SK-N-SH (cell line): ENCODE measurements at regions of chr5 and their contacts with region 1.

Region 1: DNA sequence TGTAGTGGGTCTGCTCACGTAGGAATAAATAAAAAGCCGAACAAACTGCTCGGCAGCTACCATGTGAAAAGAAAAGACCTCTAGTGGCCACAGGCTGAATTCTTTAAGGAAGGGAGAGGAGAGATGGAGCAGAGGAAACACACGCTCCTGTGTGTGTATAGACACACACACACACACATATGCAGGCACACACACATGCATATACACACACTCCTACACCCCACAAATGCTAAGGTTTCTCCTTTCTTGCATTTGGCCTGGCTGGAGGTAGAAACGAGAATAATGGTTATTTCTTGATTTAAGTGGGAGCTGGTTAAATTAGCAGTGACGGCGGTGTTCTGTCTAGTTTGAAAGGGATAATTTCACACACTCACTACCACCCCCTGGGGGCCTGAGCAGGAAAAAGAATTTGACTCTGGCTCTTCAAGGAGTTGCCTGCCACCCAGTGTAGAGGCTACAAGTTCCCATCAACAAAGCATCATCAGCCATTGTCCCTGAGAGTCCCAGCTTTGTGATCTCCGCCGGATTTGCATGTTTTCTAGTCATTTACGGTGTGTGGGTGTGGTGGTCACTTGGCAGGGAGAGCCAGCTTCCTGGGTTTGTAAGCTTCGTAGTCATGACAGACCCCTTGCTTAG is at the start of gene INSYN2B:
- DNase-seq: peak; percentile 63
- H3K4me3 ChIP-seq: peak within 1 kb of the TSS; percentile 58 to 85
- H3K27ac ChIP-seq: peak within 1 kb of the TSS; percentile 32 to 92; a peak in 3 of 4 replicates
- H3K4me1 ChIP-seq: peaks cover 2 to 24% of the 10 kb centered on the region in 2 experiments; a peak in 3 of 4 replicates
- H3K27me3 ChIP-seq: no peaks in the 10 kb centered on the region
- CTCF ChIP-seq: peak; percentile 90
- EP300 ChIP-seq: no peak
- RAD21 ChIP-seq: peak; percentile 67
- polyA plus RNA-seq, gene INSYN2B: 9.2 and 13.4 TPM in 2 replicates

Region 2: GRCh38 chr5:169567079-169567478 is 413.5 kb before region 1 on chr5:
- CTCF ChIA-PET with region 1: no interaction called
- POLR2A ChIA-PET with region 1: no interaction called
- DNase-seq: no peak
- H3K4me3 ChIP-seq: no peak overlapping the region
- H3K27ac ChIP-seq: no peak overlapping the region
- H3K4me1 ChIP-seq: no peaks in the 10 kb centered on the region
- H3K27me3 ChIP-seq: no peaks in the 10 kb centered on the region
- CTCF ChIP-seq: no peak
- EP300 ChIP-seq: no peak
- RAD21 ChIP-seq: no peak

Region 3: DNA sequence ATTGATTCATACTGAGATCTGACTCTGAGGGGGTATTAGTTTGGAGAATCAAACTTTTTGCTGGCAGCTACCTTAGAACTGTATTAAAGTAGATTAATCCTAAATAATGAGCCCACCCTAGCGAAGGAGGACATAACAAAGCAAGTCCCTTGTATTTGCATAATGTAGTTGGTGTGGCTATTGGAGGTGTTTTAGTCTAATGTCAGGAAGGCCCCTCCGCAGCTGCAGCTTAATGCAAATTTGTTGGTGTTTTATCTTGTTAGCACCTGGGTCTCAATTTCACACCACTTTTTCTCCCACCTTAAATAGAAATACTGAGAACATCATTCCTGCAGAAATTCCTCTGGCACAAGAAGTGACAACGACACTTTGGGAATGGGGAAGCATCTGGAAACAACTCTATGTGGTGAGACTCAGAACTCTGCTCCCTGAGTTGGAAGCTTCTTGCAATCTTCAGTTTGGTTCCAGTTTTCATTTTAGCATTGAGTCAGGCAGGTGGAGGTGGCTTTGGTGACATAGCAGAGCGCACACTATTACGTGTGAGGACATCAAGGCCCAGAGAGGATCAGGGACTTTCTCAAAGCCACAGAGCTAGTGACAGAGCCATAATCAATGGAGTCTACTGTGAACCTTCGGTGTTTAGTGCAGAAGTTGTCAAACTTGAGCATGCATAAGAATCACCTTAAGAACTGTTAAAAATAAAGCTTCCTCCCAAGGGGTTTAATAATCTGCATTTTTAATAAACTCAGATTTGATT is 309.6 kb before region 1 on chr5:
- CTCF ChIA-PET with region 1: interaction called, 15 read pairs
- POLR2A ChIA-PET with region 1: no interaction called
- DNase-seq: no peak
- H3K4me3 ChIP-seq: no peak overlapping the region
- H3K27ac ChIP-seq: no peak overlapping the region
- H3K4me1 ChIP-seq: peaks cover 11 to 13% of the 10 kb centered on the region in 2 experiments; a peak in 3 of 4 replicates
- H3K27me3 ChIP-seq: no peaks in the 10 kb centered on the region
- CTCF ChIP-seq: no peak
- EP300 ChIP-seq: no peak
- RAD21 ChIP-seq: no peak

Region 4: GRCh38 chr5:169723103-169723831 is 257.3 kb before region 1 on chr5:
- CTCF ChIA-PET with region 1: interaction called, 14 read pairs
- POLR2A ChIA-PET with region 1: no interaction called
- DNase-seq: no peak
- H3K4me3 ChIP-seq: no peak overlapping the region
- H3K27ac ChIP-seq: no peak overlapping the region
- H3K4me1 ChIP-seq: no peaks in the 10 kb centered on the region
- H3K27me3 ChIP-seq: no peaks in the 10 kb centered on the region
- CTCF ChIP-seq: no peak
- EP300 ChIP-seq: no peak
- RAD21 ChIP-seq: no peak

Region 5: DNA sequence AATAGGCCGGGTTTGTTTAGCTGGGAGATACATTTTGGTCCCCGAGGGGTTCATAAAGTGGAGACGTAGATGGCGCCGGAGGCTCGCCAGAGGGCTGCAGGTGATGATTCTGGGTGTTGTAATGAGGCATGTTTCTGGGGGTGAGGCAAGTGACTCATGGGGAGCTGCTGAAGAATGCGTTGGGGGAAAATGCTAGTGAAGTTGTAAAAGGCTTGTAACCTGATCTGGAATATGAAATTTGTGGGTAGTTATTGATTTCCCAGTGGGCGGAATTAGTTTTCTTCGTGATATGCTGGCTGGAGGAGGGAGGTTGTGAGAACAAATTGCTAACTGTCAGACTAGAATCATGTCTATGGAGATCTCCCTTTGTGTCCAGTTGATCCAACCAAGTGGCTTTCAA is 185.2 kb before region 1 on chr5:
- CTCF ChIA-PET with region 1: interaction called, 37 read pairs
- POLR2A ChIA-PET with region 1: no interaction called
- DNase-seq: no peak
- H3K4me3 ChIP-seq: no peak overlapping the region
- H3K27ac ChIP-seq: no peak overlapping the region
- H3K4me1 ChIP-seq: peaks cover 0 to 6% of the 10 kb centered on the region in 2 experiments; a peak in 1 of 4 replicates
- H3K27me3 ChIP-seq: no peaks in the 10 kb centered on the region
- CTCF ChIP-seq: no peak
- EP300 ChIP-seq: no peak
- RAD21 ChIP-seq: 0 out of 2 replicates have a peak, but pooled peaks have one; percentile 27

Region 6: GRCh38 chr5:169945831-169946261 is 34.7 kb before region 1 on chr5:
- CTCF ChIA-PET with region 1: interaction called, 45 read pairs
- POLR2A ChIA-PET with region 1: no interaction called
- DNase-seq: peak; percentile 26
- H3K4me3 ChIP-seq: no peak overlapping the region
- H3K27ac ChIP-seq: peak overlapping the region; percentile 32 to 79; a peak in 3 of 4 replicates
- H3K4me1 ChIP-seq: peaks cover 2 to 20% of the 10 kb centered on the region in 2 experiments; a peak in 3 of 4 replicates
- H3K27me3 ChIP-seq: no peaks in the 10 kb centered on the region
- CTCF ChIP-seq: no peak
- EP300 ChIP-seq: no peak
- RAD21 ChIP-seq: no peak

Region 7: DNA sequence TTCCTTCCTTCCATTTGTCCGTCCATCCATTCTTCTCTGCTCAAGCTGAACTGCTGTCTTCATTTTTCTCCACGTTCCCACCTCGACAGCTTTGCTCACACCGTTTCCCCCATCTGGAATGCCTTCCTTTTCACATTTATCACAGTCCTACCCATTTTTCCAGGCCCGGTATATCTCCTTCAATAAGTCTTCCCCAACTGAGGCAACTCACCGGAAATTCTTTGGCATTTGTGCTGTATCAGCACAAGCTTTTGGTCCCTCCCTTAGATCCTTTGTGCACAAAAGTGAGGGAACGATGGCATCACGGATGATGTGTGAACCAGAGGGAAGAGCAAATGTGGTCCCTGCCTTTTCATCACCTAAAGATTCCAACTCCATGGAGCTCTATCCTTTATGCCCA is 45.3 kb after region 1 on chr5:
- CTCF ChIA-PET with region 1: interaction called, 13 read pairs
- POLR2A ChIA-PET with region 1: no interaction called
- DNase-seq: no peak
- H3K4me3 ChIP-seq: no peak overlapping the region
- H3K27ac ChIP-seq: no peak overlapping the region
- H3K4me1 ChIP-seq: no peaks in the 10 kb centered on the region; a peak in 2 of 4 replicates
- H3K27me3 ChIP-seq: no peaks in the 10 kb centered on the region; the same call in 1 of the 2 replicates
- CTCF ChIP-seq: no peak
- EP300 ChIP-seq: no peak
- RAD21 ChIP-seq: no peak

Region 8: GRCh38 chr5:170159101-170159698 is 178.7 kb after region 1 on chr5:
- CTCF ChIA-PET with region 1: no interaction called
- POLR2A ChIA-PET with region 1: no interaction called
- DNase-seq: no peak
- H3K4me3 ChIP-seq: no peak overlapping the region
- H3K27ac ChIP-seq: no peak overlapping the region
- H3K4me1 ChIP-seq: peaks cover 0 to 8% of the 10 kb centered on the region in 2 experiments; a peak in 2 of 4 replicates
- H3K27me3 ChIP-seq: no peaks in the 10 kb centered on the region
- CTCF ChIP-seq: no peak
- EP300 ChIP-seq: no peak
- RAD21 ChIP-seq: no peak

Region 9: DNA sequence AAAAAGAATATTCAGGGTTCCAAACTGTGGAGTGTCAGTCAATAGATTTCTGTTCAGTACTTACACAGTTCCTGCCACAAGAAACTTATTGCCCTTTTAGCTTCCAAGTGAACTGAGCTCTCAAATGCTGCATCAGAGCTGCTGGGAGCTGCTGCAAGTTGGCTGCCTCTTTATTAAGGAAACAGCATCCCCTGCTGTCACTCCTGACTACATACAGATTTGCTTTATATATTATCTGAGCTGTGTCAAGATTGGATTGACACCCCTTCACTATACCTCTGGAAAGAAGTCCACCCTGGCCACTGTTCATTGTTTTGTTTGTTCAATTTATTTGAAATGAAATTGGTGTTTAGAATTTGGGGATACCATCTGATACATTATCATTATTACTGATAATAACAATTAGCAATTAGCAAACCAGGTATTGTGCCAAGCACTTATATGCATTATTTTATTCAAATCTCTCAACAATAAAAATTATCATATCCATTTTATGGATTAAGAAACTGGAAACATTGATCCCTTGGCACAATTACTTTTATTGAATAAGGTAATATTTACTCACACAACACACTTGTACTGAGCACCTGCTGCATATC is 235.8 kb after region 1 on chr5:
- CTCF ChIA-PET with region 1: interaction called, 11 read pairs
- POLR2A ChIA-PET with region 1: no interaction called
- DNase-seq: peak; percentile 57
- H3K4me3 ChIP-seq: no peak overlapping the region; a peak in 1 of 4 replicates
- H3K27ac ChIP-seq: no peak overlapping the region
- H3K4me1 ChIP-seq: peaks cover 0 to 15% of the 10 kb centered on the region in 2 experiments; a peak in 1 of 4 replicates
- H3K27me3 ChIP-seq: no peaks in the 10 kb centered on the region
- CTCF ChIP-seq: peak; percentile 75
- EP300 ChIP-seq: no peak
- RAD21 ChIP-seq: peak; percentile 98